ENCODE measurements at regions of chr17 and their contacts with region 1.

Region 1: DNA sequence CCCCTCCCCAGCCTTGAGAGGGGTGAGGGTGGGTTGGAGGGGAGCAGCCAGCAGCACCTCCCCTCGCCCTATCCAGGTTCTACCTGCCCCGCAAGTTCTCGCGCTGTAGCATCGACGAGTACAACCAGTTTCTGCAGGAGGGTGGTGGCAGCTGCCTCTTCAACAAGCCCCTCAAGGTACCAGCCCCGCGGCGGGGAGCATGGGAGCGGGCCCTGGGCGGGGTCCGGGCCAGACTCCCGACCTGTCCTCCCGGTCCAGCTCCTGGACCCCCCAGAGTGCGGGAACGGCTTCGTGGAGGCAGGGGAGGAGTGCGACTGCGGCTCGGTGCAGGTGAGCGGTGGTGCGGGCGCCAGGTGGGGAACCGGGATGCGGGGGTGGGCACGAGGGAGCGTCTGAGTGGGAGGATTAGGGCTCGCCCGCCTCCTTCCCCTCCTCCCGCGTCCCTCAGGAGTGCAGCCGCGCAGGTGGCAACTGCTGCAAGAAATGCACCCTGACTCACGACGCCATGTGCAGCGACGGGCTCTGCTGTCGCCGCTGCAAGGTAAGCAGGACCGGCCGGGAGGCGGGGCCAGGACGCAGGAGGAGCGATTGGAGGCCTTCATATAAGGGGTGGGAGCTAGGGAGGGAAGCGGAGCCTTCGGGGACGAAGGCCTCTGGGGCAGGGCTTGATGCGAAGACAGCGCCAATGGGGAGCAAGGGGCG is 16.5 kb downstream of the ADAM11 start:
- DNase-seq: peak; percentile 97
- ATAC-seq: peak; percentile 95
- H3K4me3 ChIP-seq: peak overlapping the region; percentile 14 to 70 (median 66)
- H3K4me3 Mint-ChIP-seq: peak overlapping the region; percentile 92
- H3K27ac ChIP-seq: no peak overlapping the region
- H3K27ac Mint-ChIP-seq: peak overlapping the region; percentile 47
- H3K4me1 ChIP-seq: peaks cover 17 to 26% of the 10 kb centered on the region in 2 donors
- H3K4me1 Mint-ChIP-seq: peaks cover 22% of the 10 kb centered on the region
- H3K27me3 ChIP-seq: peaks cover 0 to 39% (median 4%) of the 10 kb centered on the region in 4 experiments
- H3K27me3 Mint-ChIP-seq: peaks cover 11% of the 10 kb centered on the region
- CTCF ChIP-seq: peak; percentile 71

Region 2: GRCh38 chr17:44503147-44504029 is 271.9 kb before region 1 on chr17 and contains the start of gene GPATCH8:
- CTCF ChIA-PET with region 1: no interaction called
- POLR2A ChIA-PET with region 1: no interaction called
- intact Hi-C with region 1: loop called (anchors 1 kb)
- DNase-seq: peak; percentile 96
- ATAC-seq: peak; percentile 89
- H3K4me3 ChIP-seq: peak within 1 kb of the TSS; percentile 72 to 87 (median 80)
- H3K4me3 Mint-ChIP-seq: peak within 1 kb of the TSS; percentile 98
- H3K27ac ChIP-seq: peak within 1 kb of the TSS; percentile 78 to 86
- H3K27ac Mint-ChIP-seq: peak within 1 kb of the TSS; percentile 98
- H3K4me1 ChIP-seq: peaks cover 24 to 27% of the 10 kb centered on the region in 2 donors
- H3K4me1 Mint-ChIP-seq: peaks cover 35% of the 10 kb centered on the region
- H3K27me3 ChIP-seq: peaks cover 0 to 11% (median 1%) of the 10 kb centered on the region in 4 experiments
- H3K27me3 Mint-ChIP-seq: peaks cover 15% of the 10 kb centered on the region
- CTCF ChIP-seq: no peak
- total RNA-seq, gene GPATCH8: 83.4 and 105 TPM in 2 replicates

Region 3: GRCh38 chr17:44878627-44879221 is 103.4 kb after region 1 on chr17:
- CTCF ChIA-PET with region 1: interaction called, 25 read pairs
- POLR2A ChIA-PET with region 1: no interaction called
- intact Hi-C with region 1: no loop called
- DNase-seq: peak; percentile 45
- ATAC-seq: no peak
- H3K4me3 ChIP-seq: no peak overlapping the region
- H3K4me3 Mint-ChIP-seq: no peak overlapping the region
- H3K27ac ChIP-seq: no peak overlapping the region
- H3K27ac Mint-ChIP-seq: no peak overlapping the region
- H3K4me1 ChIP-seq: no peaks in the 10 kb centered on the region
- H3K4me1 Mint-ChIP-seq: no peaks in the 10 kb centered on the region
- H3K27me3 ChIP-seq: no peaks in the 10 kb centered on the region
- H3K27me3 Mint-ChIP-seq: no peaks in the 10 kb centered on the region
- CTCF ChIP-seq: peak; percentile 64

Region 4: DNA sequence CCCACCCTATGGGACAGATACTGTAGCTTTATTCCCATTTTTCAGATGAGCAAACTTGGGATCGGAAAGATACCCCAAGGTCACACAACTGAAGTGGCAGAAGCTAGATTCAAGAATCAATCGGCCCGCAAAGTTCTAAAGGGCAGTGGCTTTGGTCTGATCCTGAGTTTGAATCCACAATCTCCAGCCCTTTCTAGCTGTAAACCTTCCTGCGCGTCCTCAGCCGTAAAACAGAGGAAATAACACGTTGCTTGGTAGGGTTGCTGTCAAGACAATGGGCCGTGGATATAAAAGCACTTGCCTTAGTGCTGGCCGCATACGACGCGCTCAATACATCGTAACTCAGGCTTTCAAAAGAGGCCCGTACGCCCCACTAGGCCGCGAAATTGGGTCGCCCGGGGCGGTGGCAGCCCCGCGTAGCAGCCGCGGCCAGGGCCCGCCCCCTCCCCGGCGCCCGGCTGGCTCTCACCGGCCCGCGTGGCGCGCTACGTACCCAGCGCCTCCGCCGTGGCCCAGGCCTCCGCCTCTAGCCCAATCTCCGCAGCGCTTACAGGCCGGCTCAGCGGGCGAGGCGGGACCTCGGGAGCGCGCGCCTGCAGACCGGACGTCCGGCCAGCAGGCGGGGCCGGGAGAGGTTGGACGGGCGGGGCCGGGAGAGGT is 275.9 kb after region 1 on chr17 and contains the start of gene DCAKD:
- CTCF ChIA-PET with region 1: no interaction called
- POLR2A ChIA-PET with region 1: no interaction called
- intact Hi-C with region 1: loop called (anchors 1 kb)
- DNase-seq: peak; percentile 94
- ATAC-seq: peak; percentile 99
- H3K4me3 ChIP-seq: peak within 1 kb of the TSS; percentile 55 to 83 (median 73)
- H3K4me3 Mint-ChIP-seq: peak within 1 kb of the TSS; percentile 89
- H3K27ac ChIP-seq: peak within 1 kb of the TSS; percentile 77 to 92
- H3K27ac Mint-ChIP-seq: peak within 1 kb of the TSS; percentile 90
- H3K4me1 ChIP-seq: peaks cover 7 to 19% of the 10 kb centered on the region in 2 donors
- H3K4me1 Mint-ChIP-seq: peaks cover 20% of the 10 kb centered on the region
- H3K27me3 ChIP-seq: no peaks in the 10 kb centered on the region
- H3K27me3 Mint-ChIP-seq: no peaks in the 10 kb centered on the region
- CTCF ChIP-seq: no peak
- total RNA-seq, gene DCAKD: 20.6 and 22.9 TPM in 2 replicates

Region 5: GRCh38 chr17:45115871-45116724 is 340.8 kb after region 1 on chr17:
- CTCF ChIA-PET with region 1: no interaction called
- POLR2A ChIA-PET with region 1: no interaction called
- intact Hi-C with region 1: no loop called
- DNase-seq: no peak
- ATAC-seq: no peak
- H3K4me3 ChIP-seq: no peak overlapping the region
- H3K4me3 Mint-ChIP-seq: no peak overlapping the region
- H3K27ac ChIP-seq: no peak overlapping the region
- H3K27ac Mint-ChIP-seq: no peak overlapping the region
- H3K4me1 ChIP-seq: peaks cover 10 to 11% of the 10 kb centered on the region in 2 donors
- H3K4me1 Mint-ChIP-seq: peaks cover 11% of the 10 kb centered on the region
- H3K27me3 ChIP-seq: peaks cover 0 to 5% (median 0%) of the 10 kb centered on the region in 4 experiments
- H3K27me3 Mint-ChIP-seq: peaks cover 5% of the 10 kb centered on the region
- CTCF ChIP-seq: no peak

Region 6: DNA sequence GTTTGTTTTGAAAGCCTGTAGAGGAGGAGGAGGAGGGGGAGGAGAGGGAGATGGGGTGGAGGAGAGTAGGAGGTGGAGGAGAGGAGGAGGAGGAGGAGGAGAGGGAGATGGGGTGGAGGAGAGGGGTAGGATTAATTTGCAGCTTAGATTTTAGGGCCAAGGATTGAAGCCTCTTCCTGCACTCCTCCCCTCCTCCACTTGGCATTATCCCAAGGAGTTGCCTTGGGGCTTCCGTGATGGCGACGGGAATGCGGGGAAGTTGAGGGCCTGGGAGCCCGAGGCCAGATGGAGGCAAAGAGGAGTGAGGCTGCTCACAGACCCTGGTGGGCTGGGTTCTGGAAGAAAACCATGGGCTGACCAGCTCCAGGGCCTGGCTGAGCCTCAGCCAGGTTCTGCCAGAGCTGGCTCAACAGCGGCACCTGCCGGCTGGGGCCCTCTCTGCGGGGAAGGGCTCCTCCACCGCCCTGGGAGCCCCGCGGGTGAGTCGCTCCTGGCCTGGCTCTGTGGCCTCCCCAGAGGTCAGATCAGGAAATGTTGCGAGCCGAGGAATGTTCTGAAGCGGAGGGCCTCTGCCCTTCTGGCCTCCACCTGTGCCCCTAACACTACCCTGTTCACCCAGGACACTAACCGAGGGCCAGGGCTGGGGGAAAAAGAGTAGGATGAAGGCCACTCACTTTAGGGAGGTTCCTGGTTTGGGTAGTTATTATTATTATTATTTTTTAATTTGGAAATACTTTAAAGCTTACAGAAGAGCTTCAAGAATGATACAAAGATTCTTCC is 422.5 kb after region 1 on chr17:
- CTCF ChIA-PET with region 1: no interaction called
- POLR2A ChIA-PET with region 1: no interaction called
- intact Hi-C with region 1: loop called (anchors 2 kb)
- DNase-seq: peak; percentile 87
- ATAC-seq: peak; percentile 100
- H3K4me3 ChIP-seq: no peak overlapping the region
- H3K4me3 Mint-ChIP-seq: no peak overlapping the region
- H3K27ac ChIP-seq: no peak overlapping the region
- H3K27ac Mint-ChIP-seq: peak overlapping the region; percentile 15
- H3K4me1 ChIP-seq: peaks cover 0 to 6% of the 10 kb centered on the region in 2 donors
- H3K4me1 Mint-ChIP-seq: peaks cover 9% of the 10 kb centered on the region
- H3K27me3 ChIP-seq: no peaks in the 10 kb centered on the region
- H3K27me3 Mint-ChIP-seq: no peaks in the 10 kb centered on the region
- CTCF ChIP-seq: peak; percentile 97